ENCODE measurements at regions of chr1 and their contacts with region 1.

Region 1: DNA sequence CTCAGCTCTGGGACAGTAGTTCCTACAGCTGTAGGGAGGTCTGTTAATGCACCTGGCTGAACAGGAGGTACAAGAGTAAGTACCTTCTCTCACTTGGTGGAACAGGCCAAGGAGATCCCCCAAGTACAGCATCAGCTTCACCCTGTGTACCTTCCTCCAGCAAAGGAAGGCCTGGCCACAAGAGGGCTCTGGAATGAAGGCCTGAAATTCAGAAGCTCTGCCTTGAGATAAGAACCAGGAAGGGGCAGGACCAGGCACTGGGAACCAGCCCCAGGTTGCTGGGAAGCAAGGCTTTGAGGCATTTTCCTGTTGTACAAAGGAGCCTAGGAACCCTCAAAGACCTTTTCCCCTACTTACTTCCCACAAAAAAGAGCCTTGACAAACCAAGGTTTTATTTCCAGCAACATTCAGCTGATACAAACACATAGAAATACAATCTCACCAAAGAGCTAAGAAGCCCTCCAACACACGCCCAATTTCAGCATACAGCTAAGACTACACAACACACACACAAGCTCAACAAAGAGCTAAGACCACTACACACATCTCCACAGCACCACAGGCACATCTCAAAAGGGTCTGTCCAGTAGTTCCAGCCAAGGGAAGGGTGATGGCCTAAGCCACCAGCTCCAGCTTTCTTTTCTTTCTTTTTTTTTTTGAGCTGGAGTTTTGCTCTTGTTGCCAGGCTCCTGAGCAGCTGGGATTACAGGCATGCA is 23.5 kb downstream of the F11R start:
- DNase-seq: no peak
- ATAC-seq: peak; percentile 93
- H3K4me3 ChIP-seq: no peak overlapping the region
- H3K27ac ChIP-seq: peak overlapping the region; percentile 33; the same call in 1 of the 2 replicates
- H3K4me1 ChIP-seq: peaks cover 3% of the 10 kb centered on the region; the same call in 1 of the 2 replicates
- H3K27me3 ChIP-seq: no peaks in the 10 kb centered on the region
- CTCF ChIP-seq: peak; percentile 65 to 80 (median 72)
- EP300 ChIP-seq: no peak
- POLR2A ChIP-seq: no peak
- RAD21 ChIP-seq: peak; percentile 85

Region 2: GRCh38 chr1:161013488-161014230 is 16.2 kb after region 1 on chr1:
- CTCF ChIA-PET with region 1: interaction called, 22 read pairs
- POLR2A ChIA-PET with region 1: interaction called, 7 read pairs
- RAD21 ChIA-PET with region 1: interaction called, 12 read pairs
- SMC1A ChIA-PET with region 1: interaction called, 34 read pairs
- in situ Hi-C with region 1: no loop called
- intact Hi-C with region 1: no loop called
- DNase-seq: peak; percentile 74
- ATAC-seq: peak; percentile 92
- H3K4me3 ChIP-seq: peak overlapping the region; percentile 65
- H3K27ac ChIP-seq: peak overlapping the region; percentile 97
- H3K4me1 ChIP-seq: peaks cover 28% of the 10 kb centered on the region
- H3K27me3 ChIP-seq: no peaks in the 10 kb centered on the region
- CTCF ChIP-seq: no peak
- EP300 ChIP-seq: peak in 1 of 2 experiments; percentile 39; a peak in 1 of 4 replicates
- POLR2A ChIP-seq: peak; percentile 74
- RAD21 ChIP-seq: no peak

Region 3: DNA sequence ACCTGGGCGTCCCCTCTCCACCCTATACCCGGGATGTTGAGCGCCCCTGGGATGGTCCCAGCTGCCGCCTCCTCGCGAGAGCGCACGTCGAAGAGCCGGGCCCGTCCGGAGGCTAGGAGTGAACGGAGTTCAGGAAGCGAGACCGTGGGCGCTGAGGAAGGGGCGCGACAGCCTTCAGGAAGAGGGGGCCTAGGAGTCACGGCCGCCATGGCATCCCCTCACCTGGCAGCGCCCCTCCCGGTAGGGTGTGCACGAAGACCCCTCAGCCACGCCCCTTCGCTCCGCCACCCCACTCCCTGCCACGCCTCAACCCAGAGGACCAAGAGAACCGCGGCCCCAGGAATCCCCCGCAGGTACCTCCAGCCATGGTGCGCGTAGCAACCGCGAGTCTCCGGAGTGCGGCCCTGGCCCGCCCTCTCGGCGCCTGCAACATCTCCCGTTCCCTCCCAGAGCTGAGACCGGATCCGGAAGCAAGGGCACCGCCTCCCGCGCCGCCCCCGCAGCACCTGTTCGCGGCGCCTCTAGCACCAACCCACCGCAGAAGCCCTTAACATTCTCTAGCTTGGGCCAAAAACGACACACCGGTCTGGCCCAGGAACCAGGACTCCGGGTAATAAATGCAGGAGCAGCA is 41.2 kb after region 1 on chr1 and contains the start of gene TSTD1:
- CTCF ChIA-PET with region 1: interaction called, 57 read pairs
- POLR2A ChIA-PET with region 1: interaction called, 4 read pairs
- RAD21 ChIA-PET with region 1: interaction called, 22 read pairs
- SMC1A ChIA-PET with region 1: interaction called, 51 read pairs
- in situ Hi-C with region 1: no loop called
- intact Hi-C with region 1: loop called (anchors 5 kb)
- DNase-seq: no peak
- ATAC-seq: peak; percentile 94
- H3K4me3 ChIP-seq: peak within 1 kb of the TSS; percentile 87
- H3K27ac ChIP-seq: peak within 1 kb of the TSS; percentile 69
- H3K4me1 ChIP-seq: peaks cover 12% of the 10 kb centered on the region
- H3K27me3 ChIP-seq: no peaks in the 10 kb centered on the region
- CTCF ChIP-seq: no peak
- EP300 ChIP-seq: no peak
- POLR2A ChIP-seq: peak; percentile 96
- RAD21 ChIP-seq: no peak
- polyA plus RNA-seq, gene TSTD1: 102 to 145 TPM

Region 4: DNA sequence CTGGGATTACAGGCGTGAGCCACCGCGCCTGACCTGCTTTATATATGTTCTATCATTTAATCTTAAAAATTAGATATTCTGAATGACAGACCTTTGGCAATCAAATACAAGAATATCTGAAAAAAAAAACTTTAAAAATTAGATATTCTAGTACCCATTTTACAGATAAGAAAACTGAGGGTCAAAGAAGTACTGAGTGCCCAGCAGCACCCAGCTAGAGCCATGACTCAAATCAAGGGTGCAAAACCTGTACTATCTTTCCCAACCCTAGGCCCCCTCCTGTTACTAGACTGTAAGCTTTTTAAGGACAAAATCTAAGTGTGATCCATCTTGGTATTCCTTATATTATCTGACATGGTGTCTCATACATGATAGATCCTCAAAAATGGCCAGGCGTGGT is 63.9 kb after region 1 on chr1:
- CTCF ChIA-PET with region 1: interaction called, 11 read pairs
- POLR2A ChIA-PET with region 1: no interaction called
- RAD21 ChIA-PET with region 1: interaction called, 5 read pairs
- SMC1A ChIA-PET with region 1: interaction called, 3 read pairs
- in situ Hi-C with region 1: no loop called
- intact Hi-C with region 1: no loop called
- DNase-seq: no peak
- ATAC-seq: no peak
- H3K4me3 ChIP-seq: no peak overlapping the region
- H3K27ac ChIP-seq: no peak overlapping the region
- H3K4me1 ChIP-seq: peaks cover 9% of the 10 kb centered on the region; the same call in 1 of the 2 replicates
- H3K27me3 ChIP-seq: no peaks in the 10 kb centered on the region
- CTCF ChIP-seq: no peak
- EP300 ChIP-seq: no peak
- POLR2A ChIP-seq: no peak
- RAD21 ChIP-seq: no peak

Region 5: DNA sequence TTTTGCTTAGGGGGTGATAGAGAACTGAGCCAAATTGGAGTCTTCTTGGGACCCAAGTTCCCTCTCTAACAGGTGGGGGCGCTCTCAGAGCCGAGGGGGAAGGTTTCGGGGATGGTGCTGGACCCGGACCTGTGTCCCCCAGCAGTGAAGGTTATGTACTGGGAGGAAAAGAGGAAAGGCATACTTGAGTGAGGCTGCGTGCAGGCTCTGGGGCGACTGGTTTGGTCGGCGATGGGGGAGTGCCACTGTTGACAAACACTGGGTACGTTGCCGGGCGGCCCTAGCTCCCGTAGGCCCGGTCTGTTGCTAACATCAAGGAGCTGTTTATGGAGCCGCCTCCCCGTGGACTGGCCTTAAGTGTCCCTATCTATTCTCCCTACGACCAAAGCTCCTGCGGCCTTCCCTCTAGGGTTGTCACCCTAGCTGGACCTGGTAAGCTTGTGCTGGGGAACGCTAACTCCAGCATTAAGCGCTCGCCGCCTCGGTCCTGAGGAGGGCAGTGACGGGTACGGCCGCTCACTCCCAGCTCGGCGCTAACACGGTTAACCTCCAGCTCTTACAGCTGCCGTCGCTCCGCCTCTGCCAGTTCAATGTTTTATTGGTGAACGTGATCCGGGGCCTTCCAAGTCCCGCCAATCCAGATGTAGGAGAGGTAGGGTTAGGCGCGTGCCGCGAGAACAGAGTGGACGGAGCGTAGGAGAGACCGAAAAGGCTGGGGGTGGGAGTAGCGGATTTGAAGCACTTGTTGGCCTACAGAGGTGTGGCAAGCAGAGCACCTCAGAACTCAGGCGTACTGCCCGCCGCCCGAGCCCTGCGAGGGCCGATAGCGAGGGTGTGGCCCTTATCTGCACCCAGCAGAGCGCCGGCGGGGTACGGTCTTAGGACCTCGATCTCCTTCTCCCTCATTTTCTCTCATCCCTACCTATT is 168.5 kb after region 1 on chr1 and contains the start of gene PPOX:
- CTCF ChIA-PET with region 1: interaction called, 11 read pairs
- POLR2A ChIA-PET with region 1: no interaction called
- RAD21 ChIA-PET with region 1: no interaction called
- SMC1A ChIA-PET with region 1: no interaction called
- in situ Hi-C with region 1: no loop called
- intact Hi-C with region 1: no loop called
- DNase-seq: peak; percentile 92
- ATAC-seq: peak; percentile 97
- H3K4me3 ChIP-seq: peak within 1 kb of the TSS; percentile 86
- H3K27ac ChIP-seq: peak within 1 kb of the TSS; percentile 54
- H3K4me1 ChIP-seq: peaks cover 8% of the 10 kb centered on the region
- H3K27me3 ChIP-seq: no peaks in the 10 kb centered on the region
- CTCF ChIP-seq: peak; percentile 50 to 67 (median 61)
- EP300 ChIP-seq: no peak; a peak in 1 of 4 replicates
- POLR2A ChIP-seq: peak; percentile 88
- RAD21 ChIP-seq: peak; percentile 26; the same call in 1 of the 2 replicates
- polyA plus RNA-seq, gene PPOX: 8.9 to 16.3 TPM

Measured in GM12878 (cell line).